ENCODE measurements at regions of chr7 and their contacts with region 1.

Region 1: DNA sequence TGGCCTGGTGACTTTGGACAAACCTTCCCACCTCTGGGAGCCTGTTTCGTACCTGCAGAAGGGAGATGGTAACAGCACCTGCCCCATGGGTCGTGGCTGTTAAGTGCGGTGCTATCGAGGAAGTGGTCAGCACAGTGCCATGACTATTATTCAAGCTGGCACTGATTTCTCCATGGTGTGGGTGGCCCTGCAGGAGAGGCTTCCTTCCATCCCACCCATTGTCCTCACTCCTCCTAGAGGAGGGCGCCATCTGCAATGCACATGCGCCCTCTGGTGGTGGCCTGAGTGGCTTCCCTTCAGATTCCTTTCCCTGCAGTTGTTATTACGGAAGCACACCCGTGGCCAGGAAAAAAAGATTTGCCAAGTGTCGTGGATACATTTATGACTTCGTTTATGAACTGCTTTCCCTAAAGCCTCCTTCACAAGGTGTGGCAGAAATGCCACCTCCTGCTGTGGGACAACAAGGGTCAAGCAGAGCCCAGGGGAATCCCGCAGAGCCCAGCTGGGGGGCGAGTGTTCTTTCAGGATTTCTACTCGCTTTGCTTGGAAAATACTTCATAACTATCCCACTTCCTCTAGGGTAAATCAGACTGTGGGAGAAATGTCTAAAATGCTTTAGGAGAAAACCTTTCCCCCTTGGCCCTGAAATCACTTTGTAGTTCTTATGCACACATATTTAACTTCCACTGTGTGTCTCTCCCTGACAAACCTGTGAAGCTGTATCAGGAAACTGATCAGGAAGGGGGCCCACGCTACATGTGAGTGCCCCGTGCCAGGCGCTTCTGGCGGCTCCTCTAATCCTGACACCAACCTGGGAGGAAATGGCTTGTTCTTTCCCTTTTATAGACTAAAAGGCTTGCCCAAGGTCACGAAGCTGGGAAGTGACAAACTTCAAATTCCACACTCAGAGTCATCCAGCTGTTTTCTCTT is 98.0 kb upstream of the ANLN start:
- DNase-seq: peak; percentile 43 to 94
- H3K4me3 ChIP-seq: peak overlapping the region; percentile 38 to 55
- H3K27ac ChIP-seq: peak overlapping the region; percentile 89 to 90
- H3K4me1 ChIP-seq: peaks cover 0 to 12% of the 10 kb centered on the region in 2 donors
- H3K27me3 ChIP-seq: no peaks in the 10 kb centered on the region
- CTCF ChIP-seq: peak; percentile 94 to 97 (median 96)

Region 2: GRCh38 chr7:35565927-35566326 is 725.7 kb before region 1 on chr7:
- intact Hi-C with region 1: no loop called
- DNase-seq: no peak
- H3K4me3 ChIP-seq: no peak overlapping the region
- H3K27ac ChIP-seq: no peak overlapping the region
- H3K4me1 ChIP-seq: no peaks in the 10 kb centered on the region
- H3K27me3 ChIP-seq: no peaks in the 10 kb centered on the region
- CTCF ChIP-seq: no peak

Region 3: GRCh38 chr7:35985126-35985754 is 306.4 kb before region 1 on chr7:
- intact Hi-C with region 1: loop called (anchors 1 kb)
- DNase-seq: peak in 1 of 2 donors; percentile 89
- H3K4me3 ChIP-seq: no peak overlapping the region
- H3K27ac ChIP-seq: no peak overlapping the region
- H3K4me1 ChIP-seq: peaks cover 6 to 15% of the 10 kb centered on the region in 2 donors
- H3K27me3 ChIP-seq: no peaks in the 10 kb centered on the region
- CTCF ChIP-seq: peak; percentile 90 to 93 (median 93)

Region 4: GRCh38 chr7:36115448-36116321 is 176.0 kb before region 1 on chr7:
- intact Hi-C with region 1: loop called (anchors 5 kb)
- DNase-seq: peak; percentile 21 to 91
- H3K4me3 ChIP-seq: peak overlapping the region in 1 of 2 donors; percentile 6
- H3K27ac ChIP-seq: peak overlapping the region; percentile 78 to 82
- H3K4me1 ChIP-seq: peaks cover 24 to 45% of the 10 kb centered on the region in 2 donors
- H3K27me3 ChIP-seq: no peaks in the 10 kb centered on the region
- CTCF ChIP-seq: no peak

Region 5: GRCh38 chr7:36227223-36227622 is 64.4 kb before region 1 on chr7:
- intact Hi-C with region 1: loop called (anchors 2 kb)
- DNase-seq: peak in 1 of 2 donors; percentile 78
- H3K4me3 ChIP-seq: no peak overlapping the region
- H3K27ac ChIP-seq: peak overlapping the region; percentile 4 to 55
- H3K4me1 ChIP-seq: peaks cover under 1 to 34% of the 10 kb centered on the region in 2 donors
- H3K27me3 ChIP-seq: no peaks in the 10 kb centered on the region
- CTCF ChIP-seq: no peak

Region 6: GRCh38 chr7:36423633-36424032 is 132.0 kb after region 1 on chr7:
- intact Hi-C with region 1: no loop called
- DNase-seq: no peak
- H3K4me3 ChIP-seq: no peak overlapping the region
- H3K27ac ChIP-seq: no peak overlapping the region
- H3K4me1 ChIP-seq: no peaks in the 10 kb centered on the region
- H3K27me3 ChIP-seq: no peaks in the 10 kb centered on the region
- CTCF ChIP-seq: no peak

Measured in ascending aorta (tissue), 2 donors.